Posterior vena cava (tissue), 2 donors: ENCODE measurements at regions of chr5 and their contacts with region 1.

Region 1: GRCh38 chr5:132230871-132231270 is 3.2 kb upstream of the P4HA2 start:
- DNase-seq: peak; percentile 29

Region 2: GRCh38 chr5:132215329-132215728 is 15.5 kb before region 1 on chr5:
- intact Hi-C with region 1: loop called in 1 of 2 experiments (anchors 1 kb)
- DNase-seq: peak; percentile 98

Region 3: GRCh38 chr5:132334812-132335211 is 103.9 kb after region 1 on chr5:
- intact Hi-C with region 1: no loop called
- DNase-seq: no peak